ENCODE measurements at regions of chr5 and their contacts with region 1.

Region 1: DNA sequence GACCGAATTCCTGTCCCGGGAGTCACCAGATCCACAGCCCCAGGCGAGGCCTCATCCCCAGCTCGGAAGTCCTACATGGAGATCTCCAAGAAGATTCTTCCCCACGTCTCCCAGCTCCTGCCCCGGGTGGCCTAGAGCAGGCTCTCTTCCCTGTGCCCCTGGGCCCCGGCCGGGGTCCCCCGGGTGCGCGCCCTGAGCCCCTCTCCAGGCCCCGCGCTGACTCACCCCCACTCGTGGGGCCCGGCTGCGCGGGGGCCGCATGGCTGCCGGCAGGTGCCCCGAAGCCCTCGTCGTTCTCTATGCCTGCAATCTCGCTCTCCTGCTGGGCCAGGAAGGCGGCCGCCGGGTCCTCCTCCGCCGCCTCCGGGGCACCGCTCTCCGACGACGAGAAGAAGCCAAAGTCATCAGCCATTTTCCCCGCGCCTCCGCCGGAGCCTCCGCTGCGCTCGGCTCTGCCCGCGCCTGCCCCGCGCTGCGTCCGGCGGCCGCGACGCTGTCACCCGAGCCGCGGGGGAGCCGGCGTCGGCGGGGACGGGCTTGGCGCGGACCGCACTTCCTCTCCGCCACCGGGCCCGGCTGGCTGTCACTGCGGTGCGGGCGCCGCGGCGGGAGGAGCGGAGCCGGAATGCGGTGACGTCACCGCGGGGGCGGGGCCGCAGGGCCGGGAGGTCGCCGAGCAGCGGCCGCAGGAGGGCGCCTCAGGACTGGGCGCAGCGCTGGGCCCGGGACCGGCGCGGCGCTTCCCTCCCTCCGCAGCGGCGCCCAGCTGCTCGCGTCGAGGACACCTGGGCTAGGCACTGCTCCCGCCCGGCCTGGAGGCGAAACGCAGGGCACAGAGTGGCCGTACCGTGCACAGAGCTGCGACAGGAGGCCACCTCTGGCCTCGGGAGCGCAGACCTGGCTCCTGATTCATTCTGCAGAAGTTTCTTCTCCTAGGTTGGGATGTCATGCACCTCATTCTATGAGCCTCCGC is at the start of gene CLTB:
- DNase-seq: peak; percentile 97
- total RNA-seq, gene CLTB: 147 to 179 TPM

Region 2: DNA sequence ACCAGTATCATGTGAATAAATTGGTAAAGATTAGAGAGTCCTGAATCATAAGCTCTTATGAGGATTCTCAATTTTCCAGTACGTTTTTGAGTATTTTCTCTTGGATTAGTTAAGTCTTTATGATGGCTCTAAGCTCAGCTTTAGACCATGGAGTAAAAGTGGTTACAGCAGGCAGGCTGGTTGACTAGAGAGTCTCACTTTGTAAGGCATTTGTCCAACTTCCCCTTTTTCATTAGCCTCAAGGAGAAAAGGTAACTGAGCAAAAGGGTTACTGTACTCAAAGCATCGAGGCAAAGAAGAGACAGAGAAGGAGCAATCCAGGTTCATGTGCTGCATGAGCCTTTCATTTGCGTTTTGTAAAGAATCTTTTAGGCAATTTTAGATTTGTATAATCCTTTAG is 36.4 kb before region 1 on chr5:
- intact Hi-C with region 1: no loop called
- DNase-seq: no peak

Region 3: GRCh38 chr5:176405656-176406427 is 10.4 kb before region 1 on chr5:
- intact Hi-C with region 1: no loop called
- DNase-seq: peak; percentile 29

Region 4: GRCh38 chr5:176447982-176448608 is 31.9 kb after region 1 on chr5 and contains the start of gene FAF2:
- intact Hi-C with region 1: loop called in 1 of 2 experiments (anchors 5 kb)
- DNase-seq: peak; percentile 99
- total RNA-seq, gene FAF2: 27.3 to 27.7 TPM

Region 5: GRCh38 chr5:176543428-176544173 is 127.4 kb after region 1 on chr5:
- intact Hi-C with region 1: loop called in 1 of 2 experiments (anchors 10 kb)
- DNase-seq: peak; percentile 91

Measured in posterior vena cava (tissue), 2 donors.